ENCODE measurements at regions of chr1 and their contacts with region 1.

Region 1: DNA sequence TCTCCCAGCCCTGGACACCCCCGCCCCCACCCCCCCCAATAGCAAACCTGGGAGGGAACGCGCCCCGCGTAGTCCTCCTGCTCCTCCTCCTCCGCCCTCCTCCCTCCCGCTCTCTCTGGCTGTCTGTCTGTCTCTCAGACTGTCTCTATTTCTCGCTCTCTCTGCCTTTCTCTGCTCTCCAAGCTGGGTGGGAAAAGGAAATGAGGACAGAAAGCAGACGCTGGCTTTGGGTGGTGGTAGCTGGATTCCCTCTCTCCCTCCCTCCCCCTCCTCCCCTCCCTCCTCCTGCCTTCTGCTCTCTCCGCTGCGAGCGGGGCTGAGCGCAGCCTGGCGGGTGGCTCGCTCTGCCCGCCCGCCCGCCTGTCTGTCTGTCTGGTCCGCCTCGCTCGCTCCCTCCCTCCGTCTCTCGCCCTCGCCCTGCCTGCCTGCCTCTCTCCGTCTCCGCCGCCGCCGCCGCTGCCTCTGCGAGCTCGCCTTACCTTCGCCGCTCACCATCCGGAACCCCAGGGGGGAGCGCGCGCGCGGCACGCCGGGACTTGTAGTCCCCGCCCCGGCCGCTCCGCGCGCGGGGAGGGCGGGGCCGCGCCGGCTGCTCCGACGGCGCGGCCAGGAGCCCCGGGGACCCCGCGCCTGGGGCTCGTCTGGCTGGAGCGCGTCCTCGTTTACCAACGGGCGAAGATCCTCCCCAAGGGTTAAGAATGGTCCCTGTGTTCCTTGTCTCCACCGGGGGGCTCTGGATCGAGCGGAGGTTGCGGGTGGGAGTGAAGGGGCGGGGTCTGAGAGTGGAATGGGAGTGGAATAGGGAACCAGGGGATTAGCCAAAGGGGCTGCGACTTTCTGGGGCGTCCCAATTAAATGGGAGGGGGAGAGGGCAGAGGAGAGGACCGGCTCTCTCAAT is at the start of gene AHDC1:
- DNase-seq: peak; percentile 95
- H3K4me3 Mint-ChIP-seq: peak within 1 kb of the TSS; percentile 96
- H3K27ac Mint-ChIP-seq: peak within 1 kb of the TSS; percentile 88
- H3K4me1 Mint-ChIP-seq: peaks cover 52% of the 10 kb centered on the region
- H3K27me3 Mint-ChIP-seq: peaks cover 21% of the 10 kb centered on the region

Region 2: DNA sequence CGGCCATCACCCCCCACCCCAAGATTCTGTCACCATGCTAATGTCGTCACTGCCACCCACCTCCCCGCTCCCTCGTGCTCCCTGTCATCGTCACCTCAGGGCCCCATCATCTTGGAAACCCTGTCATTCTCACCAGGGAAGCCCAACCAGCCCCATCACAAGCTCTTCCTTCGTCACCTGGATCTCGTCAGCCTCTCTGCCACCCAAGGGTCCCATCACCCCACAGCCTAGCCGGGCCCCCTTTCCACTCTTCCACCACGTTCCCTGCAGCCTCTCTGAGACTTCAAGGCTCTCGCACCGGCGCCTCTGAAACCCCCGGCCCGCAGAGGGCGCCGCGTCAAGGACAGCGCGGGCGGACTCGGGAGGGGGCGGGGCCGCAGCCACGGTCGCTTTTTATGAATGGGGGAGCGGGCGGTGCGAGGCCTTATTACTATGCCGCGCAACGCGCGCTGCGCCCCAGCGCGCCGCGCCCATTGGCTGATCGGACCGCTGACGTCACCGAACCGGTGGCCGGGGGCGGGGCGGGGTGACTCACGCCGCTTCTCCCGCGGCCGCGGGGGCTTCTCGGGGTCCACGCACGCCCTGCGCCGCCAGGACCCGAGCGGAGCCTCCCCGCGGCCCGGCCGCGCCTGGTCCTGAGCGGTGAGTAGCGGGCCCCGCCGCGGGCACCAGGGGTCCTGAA is 211.7 kb before region 1 on chr1 and contains the start of gene GPR3:
- CTCF ChIA-PET with region 1: interaction called, 103 read pairs
- DNase-seq: peak; percentile 96
- H3K4me3 Mint-ChIP-seq: peak within 1 kb of the TSS; percentile 71
- H3K27ac Mint-ChIP-seq: peak within 1 kb of the TSS; percentile 55
- H3K4me1 Mint-ChIP-seq: peaks cover 22% of the 10 kb centered on the region
- H3K27me3 Mint-ChIP-seq: peaks cover 35% of the 10 kb centered on the region

Region 3: DNA sequence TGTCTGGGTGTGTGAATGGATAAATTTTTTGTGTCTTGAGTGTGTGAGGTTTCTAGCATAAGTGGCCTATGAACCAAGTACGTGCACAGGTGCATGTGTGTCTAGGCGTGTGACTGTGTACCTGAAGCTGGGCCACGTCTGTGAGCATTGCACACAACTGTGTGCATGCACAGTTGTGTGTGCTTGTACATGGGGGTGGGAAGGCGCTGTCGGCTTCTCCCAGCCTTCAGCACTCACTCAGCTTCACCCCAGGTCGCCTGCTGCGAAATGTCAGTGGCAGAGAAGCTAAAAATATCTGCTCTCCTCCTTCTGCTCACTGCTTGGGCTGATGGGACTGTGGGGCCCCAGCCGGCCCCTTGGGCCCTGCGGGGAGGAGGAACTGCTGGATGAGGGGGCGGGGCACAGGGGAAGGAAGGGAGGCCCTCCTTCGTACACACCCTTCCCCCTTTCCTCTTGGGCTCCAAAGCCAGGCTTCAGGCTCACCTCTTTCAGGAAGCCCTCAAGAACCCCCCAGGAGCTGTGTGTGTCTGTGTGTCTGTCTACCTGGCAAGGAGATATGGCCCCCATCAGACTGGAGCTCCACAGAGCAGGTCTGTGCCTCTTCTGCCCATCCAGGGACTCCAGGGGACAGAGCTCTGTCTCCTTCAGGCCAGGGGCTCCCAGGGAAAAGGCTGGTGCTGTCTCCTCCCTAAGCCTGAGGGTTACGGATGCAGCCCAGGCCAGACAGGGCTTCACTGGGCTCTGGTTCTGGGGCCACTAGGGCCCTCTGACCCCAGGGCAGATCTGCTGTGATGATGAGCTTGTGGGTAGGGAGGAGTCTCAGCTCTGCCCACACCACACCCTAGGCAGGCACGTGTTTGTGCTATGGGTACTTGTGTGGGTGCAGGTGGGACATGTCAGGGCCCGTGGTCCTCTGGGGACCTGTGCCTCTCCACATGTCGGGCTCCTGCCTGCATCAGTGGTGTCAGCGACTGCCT is 78.3 kb before region 1 on chr1:
- CTCF ChIA-PET with region 1: interaction called, 77 read pairs
- DNase-seq: peak; percentile 82
- H3K4me3 Mint-ChIP-seq: peak overlapping the region; percentile 74
- H3K27ac Mint-ChIP-seq: peak overlapping the region; percentile 73
- H3K4me1 Mint-ChIP-seq: peaks cover 79% of the 10 kb centered on the region
- H3K27me3 Mint-ChIP-seq: no peaks in the 10 kb centered on the region

Region 4: GRCh38 chr1:27568300-27569087 is 35.4 kb before region 1 on chr1:
- CTCF ChIA-PET with region 1: interaction called, 17 read pairs
- DNase-seq: peak; percentile 96
- H3K4me3 Mint-ChIP-seq: peak overlapping the region; percentile 56
- H3K27ac Mint-ChIP-seq: no peak overlapping the region
- H3K4me1 Mint-ChIP-seq: peaks cover 25% of the 10 kb centered on the region
- H3K27me3 Mint-ChIP-seq: peaks cover 28% of the 10 kb centered on the region

Region 5: DNA sequence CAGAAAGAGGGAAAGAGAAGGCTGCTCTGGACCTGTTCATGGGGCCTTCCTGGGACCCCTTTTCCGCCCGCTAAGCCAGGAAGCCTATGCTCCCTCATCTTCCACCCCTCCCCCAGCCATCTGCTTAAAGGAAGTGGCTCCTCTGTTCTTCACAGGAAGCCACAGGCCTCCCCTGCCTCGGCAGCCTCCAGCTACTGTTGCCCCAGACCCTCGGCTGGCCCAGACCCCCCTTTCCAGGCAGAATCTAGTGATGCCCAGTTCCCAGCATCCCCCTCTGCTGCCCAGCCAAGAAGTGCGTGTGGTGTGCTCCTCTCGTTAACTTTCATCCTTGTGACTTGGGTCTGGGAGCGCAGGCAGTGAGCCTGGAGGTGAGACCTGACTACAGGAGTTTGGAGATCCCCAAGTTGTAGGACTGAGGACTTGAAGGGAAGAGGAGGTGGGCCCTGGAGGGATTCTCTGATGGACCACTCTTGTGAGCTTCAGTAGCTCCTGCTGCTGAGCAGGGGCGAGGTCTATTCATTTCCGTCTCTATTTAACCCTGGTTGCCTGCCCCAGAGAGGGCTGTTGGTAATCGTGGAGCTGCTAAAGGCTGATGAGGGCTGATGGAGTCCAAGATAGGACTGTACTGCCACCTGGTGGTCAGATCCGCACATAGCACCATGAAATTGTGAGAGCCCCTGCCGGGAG is 58.9 kb after region 1 on chr1:
- CTCF ChIA-PET with region 1: interaction called, 221 read pairs
- DNase-seq: peak; percentile 93
- H3K4me3 Mint-ChIP-seq: peak overlapping the region; percentile 70
- H3K27ac Mint-ChIP-seq: peak overlapping the region; percentile 99
- H3K4me1 Mint-ChIP-seq: peaks cover 51% of the 10 kb centered on the region
- H3K27me3 Mint-ChIP-seq: no peaks in the 10 kb centered on the region